Activated T-helper 1 cell treated with anti-CD3 and anti-CD28 coated beads, Interleukin-12 subunit alpha, Interleukin-12 subunit beta, Interleukin-2, Interleukin-4 antibody, amounts not matched to agents 30 ng/mL and 10 ng/mL and 1 ng/mL, durations not matched to agents 14 hours and 24 hours and 36 hours (primary cell): ENCODE measurements at regions of chr22 and their contacts with region 1.

Region 1: GRCh38 chr22:38872172-38872830 is at the start of gene CBX6:
- DNase-seq: peak; percentile 94
- H3K4me3 Mint-ChIP-seq: peak within 1 kb of the TSS; percentile 89
- H3K27ac Mint-ChIP-seq: peak within 1 kb of the TSS; percentile 91
- H3K4me1 Mint-ChIP-seq: peaks cover 59% of the 10 kb centered on the region
- H3K27me3 Mint-ChIP-seq: peaks cover 2% of the 10 kb centered on the region
- total RNA-seq, gene CBX6: 171 and 178 TPM in 2 replicates

Region 2: DNA sequence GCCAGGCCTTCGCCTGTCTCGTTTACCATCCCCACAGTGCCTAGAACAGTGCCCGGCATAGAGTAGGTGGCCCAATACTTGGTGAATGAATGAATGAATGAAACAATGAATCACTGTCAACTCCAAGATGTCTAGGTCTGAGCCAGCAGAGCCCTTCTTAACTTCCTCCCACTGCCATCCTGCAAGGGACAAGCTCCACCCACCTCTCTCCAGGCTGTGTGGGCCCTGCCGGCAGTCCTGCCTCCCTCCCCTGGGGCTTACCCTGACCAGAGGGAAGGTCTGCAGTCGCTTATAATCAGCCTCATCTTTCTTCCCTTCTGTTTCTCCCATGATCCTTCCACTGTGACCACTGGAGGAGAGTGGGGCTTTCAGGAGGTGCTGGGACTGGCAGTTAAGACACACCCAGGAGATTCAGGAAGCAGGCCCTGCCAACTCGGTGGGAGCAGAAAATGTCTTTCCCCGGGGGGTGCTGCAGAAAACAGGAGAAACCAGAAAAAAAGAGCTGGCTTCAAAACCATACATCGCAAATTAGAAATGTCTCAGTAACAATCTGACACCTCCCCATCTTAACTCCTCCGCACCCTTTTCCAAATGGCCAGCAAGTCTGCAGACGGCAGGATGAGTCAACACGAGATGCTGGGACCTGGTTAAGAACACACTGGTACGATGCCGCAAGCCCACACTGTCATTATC is 89.8 kb before region 1 on chr22:
- intact Hi-C with region 1: no loop called
- DNase-seq: no peak
- H3K4me3 Mint-ChIP-seq: no peak overlapping the region
- H3K27ac Mint-ChIP-seq: no peak overlapping the region
- H3K4me1 Mint-ChIP-seq: no peaks in the 10 kb centered on the region
- H3K27me3 Mint-ChIP-seq: no peaks in the 10 kb centered on the region

Region 3: GRCh38 chr22:38953577-38954413 is 81.5 kb after region 1 on chr22:
- intact Hi-C with region 1: loop called (anchors 1 kb)
- DNase-seq: peak; percentile 84
- H3K4me3 Mint-ChIP-seq: peak overlapping the region; percentile 63
- H3K27ac Mint-ChIP-seq: peak overlapping the region; percentile 98
- H3K4me1 Mint-ChIP-seq: peaks cover 67% of the 10 kb centered on the region
- H3K27me3 Mint-ChIP-seq: peaks cover 6% of the 10 kb centered on the region

Region 4: DNA sequence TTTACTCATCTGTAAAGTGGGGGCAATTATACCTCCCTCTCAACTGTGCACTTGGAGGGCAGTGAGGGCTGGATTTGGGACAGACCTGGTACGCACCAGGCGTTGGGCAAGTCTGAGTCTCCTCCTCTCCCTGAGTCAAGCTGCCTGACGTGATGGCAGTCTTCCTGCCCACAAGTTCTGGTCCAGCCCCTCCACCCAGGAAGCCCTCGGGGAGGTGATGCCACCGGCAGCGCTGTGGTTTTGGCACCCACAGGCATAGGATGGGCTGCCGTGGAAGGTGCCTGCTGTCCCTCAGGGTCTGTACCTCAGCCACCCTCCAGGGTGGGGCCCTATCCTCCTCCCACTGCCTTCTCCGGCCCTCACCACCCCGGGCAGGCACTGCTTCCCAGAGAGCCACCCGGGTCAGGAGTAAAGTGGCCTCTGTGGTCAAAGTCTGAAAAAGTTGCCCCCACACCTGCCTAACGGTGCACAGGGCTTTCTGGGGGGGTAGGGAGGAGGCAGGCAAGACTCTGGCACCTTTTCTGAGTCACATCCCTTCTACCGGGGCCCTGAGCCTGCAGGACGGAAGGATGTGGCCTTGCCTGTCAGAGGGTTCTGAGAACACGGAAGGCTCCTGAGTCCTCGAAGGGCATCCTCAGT is 218.2 kb after region 1 on chr22:
- intact Hi-C with region 1: loop called (anchors 2 kb)
- DNase-seq: peak; percentile 81
- H3K4me3 Mint-ChIP-seq: peak overlapping the region; percentile 75
- H3K27ac Mint-ChIP-seq: peak overlapping the region; percentile 94
- H3K4me1 Mint-ChIP-seq: peaks cover 80% of the 10 kb centered on the region
- H3K27me3 Mint-ChIP-seq: no peaks in the 10 kb centered on the region